OCI-LY7 (cell line): ENCODE measurements at regions of chr3 and their contacts with region 1.

Region 1: GRCh38 chr3:10192953-10193691 is 28.4 kb downstream of the IRAK2 start:
- DNase-seq: peak; percentile 89
- H3K4me3 ChIP-seq: peak overlapping the region; percentile 40
- H3K27ac ChIP-seq: peak overlapping the region; percentile 74
- H3K4me1 ChIP-seq: peaks cover 81% of the 10 kb centered on the region
- CTCF ChIP-seq: peak; percentile 59

Region 2: DNA sequence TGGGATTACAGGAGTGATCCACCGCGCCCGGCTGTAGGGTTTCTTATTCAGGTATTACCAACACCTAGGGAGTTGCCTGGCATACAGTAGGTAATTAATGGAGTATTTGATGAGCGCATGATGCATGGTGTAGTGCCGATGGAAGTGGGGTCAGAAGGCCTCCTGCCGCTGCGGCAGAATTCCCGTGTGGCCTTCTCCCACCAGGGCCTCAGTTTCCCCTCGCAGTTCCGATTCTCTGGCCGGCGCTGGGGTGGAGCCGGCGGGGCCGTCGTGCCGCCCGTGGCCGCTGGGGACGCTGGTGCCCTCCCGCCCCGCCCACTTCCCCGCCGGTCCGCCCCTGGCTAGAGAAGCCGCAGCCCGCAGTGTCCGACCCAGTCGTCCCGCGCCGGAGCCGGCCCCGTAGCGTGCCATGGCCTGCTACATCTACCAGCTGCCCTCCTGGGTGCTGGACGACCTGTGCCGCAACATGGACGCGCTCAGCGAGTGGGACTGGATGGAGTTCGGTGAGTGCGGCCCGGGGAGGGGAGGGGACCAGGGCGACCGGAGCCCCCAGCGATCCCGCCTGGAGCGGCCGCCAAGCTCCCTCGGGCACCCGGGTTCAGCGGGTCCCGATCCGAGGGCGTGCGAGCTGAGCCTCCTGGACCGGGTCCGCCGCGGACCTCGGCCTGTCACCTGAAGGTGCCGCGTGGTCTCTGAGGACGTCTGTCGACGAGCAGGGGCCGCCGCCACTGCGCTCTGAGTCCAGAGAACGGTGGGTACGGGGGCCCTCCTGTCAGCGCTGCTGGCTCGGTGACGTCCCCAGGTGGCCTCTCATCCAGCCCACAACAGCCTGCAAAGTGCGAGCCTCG is 28.4 kb before region 1 on chr3 and contains the start of gene IRAK2:
- CTCF ChIA-PET with region 1: interaction called, 4 read pairs
- POLR2A ChIA-PET with region 1: interaction called, 10 read pairs
- intact Hi-C with region 1: no loop called
- DNase-seq: peak; percentile 68
- H3K4me3 ChIP-seq: peak within 1 kb of the TSS; percentile 70
- H3K27ac ChIP-seq: no peak within 1 kb of the TSS
- H3K4me1 ChIP-seq: peaks cover 13% of the 10 kb centered on the region
- CTCF ChIP-seq: peak; percentile 73
- total RNA-seq, gene IRAK2: 1.1 and 1.4 TPM in 2 replicates

Region 3: DNA sequence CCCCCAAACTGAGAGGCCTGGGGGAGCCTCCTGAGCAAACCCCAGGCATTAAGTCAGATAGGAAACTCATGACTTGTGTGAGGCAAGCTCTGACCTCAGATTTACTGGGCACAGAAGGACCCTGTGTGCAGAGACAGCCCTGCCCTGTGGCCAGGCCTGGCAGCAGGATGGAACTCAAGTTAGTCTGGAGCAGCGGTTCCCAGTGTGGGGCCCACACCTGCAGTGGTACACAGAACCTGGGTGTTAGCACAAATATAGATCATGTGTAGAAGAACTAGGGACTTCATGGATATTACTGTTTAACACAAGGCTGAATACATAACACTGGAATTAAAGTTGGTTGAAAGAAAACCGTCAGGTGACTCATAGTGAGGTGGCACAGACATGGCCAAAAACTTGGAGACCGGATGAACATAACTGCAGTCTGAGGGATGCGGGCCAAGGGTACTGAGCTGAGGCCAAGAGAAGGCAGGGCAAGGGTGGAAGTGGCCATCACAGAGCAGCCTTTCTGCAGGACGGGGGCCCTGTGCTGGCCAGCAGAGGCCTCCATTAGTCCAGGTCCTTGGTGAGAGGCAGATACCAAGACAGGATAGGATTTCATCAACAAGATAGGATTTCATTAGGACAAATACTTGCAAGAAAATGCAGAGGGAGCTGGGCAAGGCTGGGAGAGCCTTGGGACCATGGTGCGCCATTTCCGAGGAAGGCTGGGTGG is 12.5 kb after region 1 on chr3:
- CTCF ChIA-PET with region 1: interaction called, 3 read pairs
- POLR2A ChIA-PET with region 1: interaction called, 5 read pairs
- intact Hi-C with region 1: loop called (anchors 2 kb)
- DNase-seq: no peak
- H3K4me3 ChIP-seq: no peak overlapping the region
- H3K27ac ChIP-seq: no peak overlapping the region
- H3K4me1 ChIP-seq: peaks cover 11% of the 10 kb centered on the region
- CTCF ChIP-seq: no peak

Region 4: GRCh38 chr3:10213156-10213792 is 20.2 kb after region 1 on chr3:
- CTCF ChIA-PET with region 1: interaction called, 13 read pairs
- POLR2A ChIA-PET with region 1: interaction called, 32 read pairs
- intact Hi-C with region 1: loop called (anchors 2 kb)
- DNase-seq: peak; percentile 68
- H3K4me3 ChIP-seq: peak overlapping the region; percentile 5
- H3K27ac ChIP-seq: peak overlapping the region; percentile 16
- H3K4me1 ChIP-seq: peaks cover 50% of the 10 kb centered on the region
- CTCF ChIP-seq: no peak